AG04450 (cell line): ENCODE measurements at regions of chr17 and their contacts with region 1.

Region 1: GRCh38 chr17:79045842-79046196 is 21.9 kb downstream of the C1QTNF1 start:
- DNase-seq: no peak
- H3K4me3 ChIP-seq: no peak overlapping the region
- H3K27ac ChIP-seq: no peak overlapping the region
- H3K27me3 ChIP-seq: no peaks in the 10 kb centered on the region
- CTCF ChIP-seq: peak; percentile 97

Region 2: DNA sequence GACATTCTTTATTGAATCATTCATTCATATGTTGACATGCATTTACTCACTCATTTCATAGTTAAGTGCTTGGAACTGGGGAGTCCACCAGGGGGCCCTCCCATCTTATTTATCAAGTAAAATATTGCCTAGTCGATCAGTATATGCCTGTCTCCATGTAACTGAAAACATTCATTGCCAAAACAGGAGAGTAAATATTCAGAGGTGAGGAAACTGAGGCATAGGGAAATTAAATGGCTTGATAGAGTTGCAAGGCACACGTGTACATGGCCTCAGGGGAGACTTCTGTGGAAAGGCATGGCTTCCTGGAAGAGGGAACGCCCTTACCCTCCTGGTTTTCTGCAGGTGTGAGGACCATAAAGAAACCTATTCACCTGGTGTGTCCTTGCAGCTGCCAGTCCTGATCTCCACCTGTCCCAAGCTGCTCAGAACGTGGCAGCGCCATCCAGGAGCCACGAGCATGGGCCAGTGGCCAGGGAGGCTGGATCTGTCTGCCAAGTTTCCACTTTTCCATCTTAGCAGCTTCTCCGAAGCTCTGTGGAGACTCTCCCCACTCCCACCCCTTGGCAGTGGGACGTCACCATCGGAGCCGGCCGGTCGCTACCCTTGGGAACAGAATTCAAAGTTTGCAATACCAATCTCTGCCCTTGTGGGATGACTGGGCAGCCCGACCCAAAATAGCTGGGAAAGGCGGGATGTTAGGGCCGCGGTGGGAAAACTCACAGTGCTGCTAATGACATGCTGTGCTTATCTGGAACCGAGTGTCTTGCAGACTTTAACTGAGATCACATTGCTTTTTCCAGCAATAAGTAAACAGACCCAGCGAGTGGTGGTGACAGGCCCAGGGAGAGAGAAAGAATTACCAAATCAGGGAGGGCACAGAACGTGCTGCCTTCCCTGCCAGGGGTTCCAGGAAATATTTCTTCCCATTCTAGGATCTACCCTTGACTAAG is 25.9 kb before region 1 on chr17:
- CTCF ChIA-PET with region 1: interaction called, 33 read pairs
- POLR2A ChIA-PET with region 1: no interaction called
- DNase-seq: peak; percentile 56
- H3K4me3 ChIP-seq: 0 out of 2 replicates have a peak overlapping the region, but pooled peaks have one; percentile 0
- H3K27ac ChIP-seq: no peak overlapping the region
- H3K27me3 ChIP-seq: peaks cover 3% of the 10 kb centered on the region
- CTCF ChIP-seq: peak; percentile 80

Region 3: DNA sequence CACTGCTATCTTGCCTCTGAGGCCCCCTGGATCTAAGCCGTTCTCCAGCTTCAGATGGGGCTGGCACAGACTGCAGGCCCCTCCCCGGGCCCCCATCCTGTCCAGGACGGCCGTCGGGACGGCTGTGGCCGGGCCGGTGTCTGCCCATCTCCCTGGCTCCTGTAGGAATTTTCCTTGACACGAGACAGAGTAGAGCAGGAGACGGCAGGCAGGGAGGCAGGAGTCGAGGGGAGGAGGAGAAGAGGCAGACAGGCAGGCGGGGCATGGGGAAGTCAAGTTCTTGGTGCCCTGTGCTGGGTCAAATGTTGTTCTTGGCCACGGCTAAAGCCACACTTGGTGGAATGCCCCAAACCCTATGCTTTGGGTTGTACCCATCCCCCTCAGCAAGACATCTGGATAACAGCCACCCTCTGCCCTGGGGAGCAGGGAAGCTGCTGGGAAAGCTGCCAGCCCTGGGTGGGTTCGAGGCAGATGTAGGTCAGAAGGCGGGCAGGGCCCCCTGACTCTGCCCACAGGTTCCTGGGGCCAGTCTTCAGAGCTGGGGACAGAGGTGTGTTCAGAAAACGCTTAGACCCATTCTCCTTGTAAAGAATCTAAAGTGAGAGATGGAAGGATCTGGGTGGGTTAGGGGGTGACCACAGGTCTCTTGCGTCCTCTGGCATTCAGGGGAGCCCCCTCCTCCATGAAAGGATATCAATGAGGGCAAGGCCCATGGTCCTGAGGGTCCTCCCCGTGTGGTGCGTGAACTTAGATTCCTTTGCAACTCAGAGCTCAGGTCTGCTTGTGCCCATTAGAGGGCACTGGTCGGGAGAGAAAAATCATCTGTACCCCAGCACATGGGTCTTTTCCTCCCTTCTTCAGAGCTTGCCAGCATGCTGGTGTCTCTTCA is 17.6 kb before region 1 on chr17:
- CTCF ChIA-PET with region 1: interaction called, 42 read pairs
- POLR2A ChIA-PET with region 1: no interaction called
- DNase-seq: no peak
- H3K4me3 ChIP-seq: no peak overlapping the region
- H3K27ac ChIP-seq: no peak overlapping the region
- H3K27me3 ChIP-seq: no peaks in the 10 kb centered on the region
- CTCF ChIP-seq: peak; percentile 26; the same call in 1 of the 2 replicates

Region 4: DNA sequence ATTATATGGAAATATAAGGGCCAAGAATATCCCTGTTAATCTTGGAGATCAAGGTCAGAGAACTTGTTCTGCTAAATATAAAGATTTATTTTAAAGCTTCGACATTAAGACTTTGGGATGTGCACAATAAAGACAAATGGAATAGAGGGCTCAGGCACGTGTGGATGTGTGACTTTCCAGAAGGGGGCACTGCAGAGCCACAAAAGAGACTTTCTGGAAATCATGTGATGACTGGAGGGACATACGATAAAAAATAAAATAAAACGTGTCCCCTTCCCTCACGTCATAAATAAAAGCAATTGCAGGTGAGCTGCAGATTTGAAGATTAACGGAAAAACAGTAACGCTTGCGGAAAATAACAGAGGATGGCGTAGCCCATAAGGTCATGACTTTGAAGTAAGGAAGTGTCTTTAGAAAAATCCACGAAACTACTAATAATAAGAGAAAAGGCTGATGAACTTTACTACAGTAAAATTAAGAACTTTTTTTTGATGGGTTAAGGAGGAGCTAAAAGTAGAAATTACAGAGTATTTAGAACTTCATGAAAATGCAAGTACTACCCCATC is 19.4 kb after region 1 on chr17:
- CTCF ChIA-PET with region 1: interaction called, 13 read pairs
- POLR2A ChIA-PET with region 1: no interaction called
- DNase-seq: no peak
- H3K4me3 ChIP-seq: no peak overlapping the region
- H3K27ac ChIP-seq: no peak overlapping the region
- H3K27me3 ChIP-seq: peaks cover 3% of the 10 kb centered on the region
- CTCF ChIP-seq: peak; percentile 54

Region 5: GRCh38 chr17:79082311-79083190 is 36.7 kb after region 1 on chr17:
- CTCF ChIA-PET with region 1: interaction called, 30 read pairs
- POLR2A ChIA-PET with region 1: interaction called, 5 read pairs
- DNase-seq: no peak
- H3K4me3 ChIP-seq: no peak overlapping the region
- H3K27ac ChIP-seq: no peak overlapping the region
- H3K27me3 ChIP-seq: no peaks in the 10 kb centered on the region
- CTCF ChIP-seq: peak; percentile 86